ENCODE measurements at regions of chr17 and their contacts with region 1.

Region 1: GRCh38 chr17:10844621-10845387 is 6.9 kb upstream of the PIRT start:
- DNase-seq: peak; percentile 80 to 89
- ATAC-seq: peak; percentile 95
- H3K4me3 ChIP-seq: peak overlapping the region; percentile 4 to 89
- H3K27ac ChIP-seq: no peak overlapping the region
- H3K4me1 ChIP-seq: no peaks in the 10 kb centered on the region
- H3K27me3 ChIP-seq: no peaks in the 10 kb centered on the region

Region 2: DNA sequence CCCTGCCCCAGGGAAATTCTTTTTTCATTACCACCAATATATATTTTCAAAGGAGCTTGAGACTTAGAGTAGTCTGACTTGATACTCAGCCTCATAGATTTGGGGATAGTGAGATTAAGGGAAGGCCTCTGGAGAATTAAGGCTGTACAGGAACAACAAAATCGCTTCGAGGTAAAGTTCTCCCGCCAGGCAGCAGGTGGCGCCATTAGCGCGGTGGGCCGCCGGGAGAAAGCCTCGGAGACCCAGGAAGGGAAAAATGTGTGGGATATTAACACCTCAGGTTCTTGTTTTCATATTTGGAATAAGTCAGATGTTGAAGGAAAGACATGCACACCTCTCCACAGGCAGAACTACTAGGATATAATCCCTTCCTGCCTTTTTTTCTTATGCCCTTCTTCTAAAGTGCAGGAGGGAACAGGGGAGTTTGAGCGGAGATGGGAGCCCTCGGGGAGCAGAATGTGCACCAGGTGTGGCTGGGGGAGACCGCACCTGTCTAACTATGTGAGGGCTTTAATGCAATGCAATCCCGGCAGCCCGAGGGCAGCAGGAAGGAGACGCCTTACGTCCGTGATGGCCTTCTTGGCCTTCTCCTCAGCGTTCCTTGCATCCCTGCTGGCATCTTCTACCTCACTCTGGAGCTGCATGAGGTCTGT is 213.6 kb before region 1 on chr17:
- intact Hi-C with region 1: loop called (anchors 5 kb)
- DNase-seq: no peak
- ATAC-seq: no peak
- H3K4me3 ChIP-seq: no peak overlapping the region
- H3K27ac ChIP-seq: no peak overlapping the region
- H3K4me1 ChIP-seq: no peaks in the 10 kb centered on the region
- H3K27me3 ChIP-seq: no peaks in the 10 kb centered on the region

Region 3: DNA sequence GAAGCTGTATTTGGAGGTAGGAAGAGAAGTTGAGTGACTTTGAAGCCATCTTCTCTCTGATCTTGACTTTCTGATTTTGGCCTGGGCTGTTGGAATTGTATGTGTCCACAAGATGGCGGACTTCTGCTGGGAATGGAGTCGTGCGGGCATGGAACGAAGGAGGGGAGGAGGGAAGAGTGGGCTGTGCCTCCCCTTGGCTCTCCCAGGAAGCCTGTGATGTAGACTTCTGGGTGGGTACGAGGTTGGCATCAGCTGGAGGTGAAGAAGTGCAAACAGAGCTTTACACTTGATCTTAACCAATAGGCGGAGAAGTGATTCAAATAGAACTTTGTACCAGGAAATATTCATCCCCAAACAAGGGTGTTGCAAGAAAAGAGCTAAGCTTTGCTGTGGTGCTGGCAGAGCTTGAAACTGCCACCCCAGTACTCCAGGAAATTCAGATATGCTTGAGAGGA is 107.6 kb before region 1 on chr17:
- intact Hi-C with region 1: loop called (anchors 1 kb)
- DNase-seq: peak in 1 of 2 donors; percentile 71
- ATAC-seq: peak; percentile 83
- H3K4me3 ChIP-seq: no peak overlapping the region
- H3K27ac ChIP-seq: no peak overlapping the region
- H3K4me1 ChIP-seq: no peaks in the 10 kb centered on the region
- H3K27me3 ChIP-seq: no peaks in the 10 kb centered on the region

Region 4: DNA sequence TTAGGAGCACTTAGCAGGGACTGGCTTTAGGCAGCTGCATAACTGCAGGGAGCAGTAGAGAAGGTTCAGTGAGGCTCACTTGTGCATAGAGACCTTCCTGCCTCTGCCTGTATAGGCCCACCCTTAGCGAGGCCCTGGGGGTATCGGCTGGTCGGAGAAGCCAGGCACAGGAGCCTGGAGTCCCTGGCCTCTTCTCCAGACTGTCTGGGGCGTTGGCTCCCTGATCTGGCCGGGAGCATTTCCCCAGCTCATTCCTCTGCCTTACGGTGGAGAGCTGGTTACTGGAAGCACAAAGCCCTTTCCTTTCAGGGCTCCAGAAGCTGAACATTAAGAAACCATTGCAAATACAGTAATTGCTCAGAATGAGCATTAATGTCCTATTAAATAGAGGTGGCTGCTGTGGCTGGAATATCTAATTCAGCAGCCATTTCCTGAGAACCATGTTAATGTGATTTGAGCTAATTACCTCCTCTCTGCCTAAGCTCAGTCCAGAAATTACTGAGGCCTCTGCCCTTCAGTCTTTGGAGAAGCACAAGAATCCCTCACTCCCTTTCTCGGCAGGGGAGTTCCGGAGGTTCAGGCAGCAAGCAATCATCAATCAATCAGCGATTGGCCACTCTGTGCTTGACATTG is 96.2 kb before region 1 on chr17:
- intact Hi-C with region 1: no loop called
- DNase-seq: peak in 1 of 2 donors; percentile 57
- ATAC-seq: no peak
- H3K4me3 ChIP-seq: no peak overlapping the region
- H3K27ac ChIP-seq: no peak overlapping the region
- H3K4me1 ChIP-seq: no peaks in the 10 kb centered on the region
- H3K27me3 ChIP-seq: no peaks in the 10 kb centered on the region